PC-9 (cell line): ENCODE measurements at regions of chrX and their contacts with region 1.

Region 1: GRCh38 chrX:30875961-30876360 is 13.1 kb downstream of the TAB3 start:
- DNase-seq: peak in 1 of 2 experiments; percentile 86
- H3K4me3 ChIP-seq: peak overlapping the region; percentile 45; the same call in 1 of the 2 replicates
- H3K27ac ChIP-seq: peak overlapping the region; percentile 95
- H3K4me1 ChIP-seq: peaks cover 46% of the 10 kb centered on the region
- H3K27me3 ChIP-seq: no peaks in the 10 kb centered on the region
- CTCF ChIP-seq: no peak

Region 2: DNA sequence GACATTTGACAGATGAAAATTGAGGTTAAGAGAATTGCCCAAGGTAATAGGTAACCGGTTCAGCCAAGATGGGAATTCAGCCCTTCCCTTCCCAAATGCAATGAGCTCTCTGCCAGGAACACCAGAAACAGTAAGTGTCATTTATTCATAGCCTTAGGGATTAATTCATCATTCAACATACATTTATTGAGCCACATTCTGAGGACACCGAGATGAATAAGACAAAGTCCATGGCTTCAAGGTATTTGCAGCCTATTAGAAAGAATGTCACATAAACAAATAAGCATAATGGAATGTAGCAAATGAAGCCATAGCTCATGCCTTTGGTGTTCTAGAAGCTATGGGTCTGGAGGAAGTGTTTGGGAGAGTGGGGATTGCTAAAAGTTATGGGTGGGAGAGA is 19.4 kb after region 1 on chrX:
- CTCF ChIA-PET with region 1: no interaction called
- POLR2A ChIA-PET with region 1: interaction called, 11 read pairs
- intact Hi-C with region 1: no loop called
- DNase-seq: peak; percentile 10 to 97
- H3K4me3 ChIP-seq: no peak overlapping the region
- H3K27ac ChIP-seq: peak overlapping the region; percentile 92
- H3K4me1 ChIP-seq: peaks cover 56% of the 10 kb centered on the region
- H3K27me3 ChIP-seq: no peaks in the 10 kb centered on the region
- CTCF ChIP-seq: no peak

Region 3: DNA sequence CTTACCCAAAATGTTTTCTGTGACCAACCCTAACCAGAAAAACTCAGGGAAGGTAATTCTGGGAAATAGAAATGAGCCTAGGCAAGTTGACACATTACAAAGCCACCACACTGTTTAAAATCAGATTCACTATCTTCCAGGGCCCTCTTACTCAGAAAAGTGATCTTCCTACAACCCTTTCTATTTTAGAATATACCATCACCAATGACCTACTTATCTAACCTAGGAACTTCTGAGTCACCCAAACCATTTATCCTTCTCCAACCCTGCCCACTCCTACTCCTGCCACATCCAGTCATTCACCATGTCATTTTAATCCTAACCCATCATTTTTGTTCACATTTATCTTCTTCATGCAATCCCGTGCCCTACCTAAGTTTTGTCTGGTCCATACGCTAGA is 106.0 kb after region 1 on chrX:
- CTCF ChIA-PET with region 1: no interaction called
- POLR2A ChIA-PET with region 1: no interaction called
- intact Hi-C with region 1: no loop called
- DNase-seq: no peak
- H3K4me3 ChIP-seq: no peak overlapping the region
- H3K27ac ChIP-seq: no peak overlapping the region
- H3K4me1 ChIP-seq: no peaks in the 10 kb centered on the region
- H3K27me3 ChIP-seq: no peaks in the 10 kb centered on the region
- CTCF ChIP-seq: no peak